Activated CD4-positive, alpha-beta T cell treated with anti-CD3 and anti-CD28 coated beads for 36 hours (primary cell): ENCODE measurements at regions of chr19 and their contacts with region 1.

Region 1: DNA sequence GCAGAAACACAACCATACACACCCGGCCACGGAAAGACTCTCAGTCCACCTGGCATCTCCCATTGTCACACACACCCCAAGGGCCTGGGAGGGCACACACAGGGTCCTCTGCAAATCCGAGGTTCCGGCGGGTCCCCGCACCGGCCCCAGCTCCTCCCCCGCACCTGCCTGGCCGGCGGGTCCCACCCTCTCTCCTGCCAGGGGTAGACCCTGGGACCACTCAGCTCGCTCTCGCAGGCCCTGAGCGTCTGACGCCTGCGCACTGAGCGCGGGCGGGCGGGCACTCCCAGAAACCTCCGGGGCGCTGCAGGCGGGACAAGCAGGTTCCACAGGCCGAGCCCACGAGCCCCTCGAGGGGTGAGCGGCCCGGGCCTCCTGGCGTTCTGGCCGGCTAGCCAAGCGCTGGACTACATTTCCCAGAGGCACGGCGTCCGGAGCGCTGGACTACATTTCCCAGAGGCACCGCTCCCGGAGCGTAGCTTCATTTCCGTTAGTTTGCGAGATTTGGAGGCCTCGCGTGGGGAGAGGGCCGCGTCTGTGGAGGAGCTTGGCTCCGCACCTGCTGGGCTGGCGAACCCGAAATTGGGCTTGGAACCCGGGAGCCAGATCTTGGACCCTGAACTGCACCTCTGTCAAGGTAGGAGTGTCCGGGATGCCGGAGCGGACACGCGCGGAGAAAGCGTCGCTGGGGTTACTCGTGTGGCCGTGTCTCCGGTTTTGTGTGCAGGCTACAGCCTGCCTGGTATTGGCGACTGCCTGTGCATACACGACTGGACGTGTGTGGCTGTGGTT is at the start of gene ZNF420:
- DNase-seq: peak; percentile 93
- ATAC-seq: peak; percentile 95
- H3K4me3 Mint-ChIP-seq: peak within 1 kb of the TSS; percentile 97
- H3K27ac Mint-ChIP-seq: peak within 1 kb of the TSS; percentile 98
- H3K4me1 Mint-ChIP-seq: peaks cover 23% of the 10 kb centered on the region
- H3K27me3 Mint-ChIP-seq: no peaks in the 10 kb centered on the region
- total RNA-seq, gene ZNF420: 9.1 to 12.8 TPM

Region 2: DNA sequence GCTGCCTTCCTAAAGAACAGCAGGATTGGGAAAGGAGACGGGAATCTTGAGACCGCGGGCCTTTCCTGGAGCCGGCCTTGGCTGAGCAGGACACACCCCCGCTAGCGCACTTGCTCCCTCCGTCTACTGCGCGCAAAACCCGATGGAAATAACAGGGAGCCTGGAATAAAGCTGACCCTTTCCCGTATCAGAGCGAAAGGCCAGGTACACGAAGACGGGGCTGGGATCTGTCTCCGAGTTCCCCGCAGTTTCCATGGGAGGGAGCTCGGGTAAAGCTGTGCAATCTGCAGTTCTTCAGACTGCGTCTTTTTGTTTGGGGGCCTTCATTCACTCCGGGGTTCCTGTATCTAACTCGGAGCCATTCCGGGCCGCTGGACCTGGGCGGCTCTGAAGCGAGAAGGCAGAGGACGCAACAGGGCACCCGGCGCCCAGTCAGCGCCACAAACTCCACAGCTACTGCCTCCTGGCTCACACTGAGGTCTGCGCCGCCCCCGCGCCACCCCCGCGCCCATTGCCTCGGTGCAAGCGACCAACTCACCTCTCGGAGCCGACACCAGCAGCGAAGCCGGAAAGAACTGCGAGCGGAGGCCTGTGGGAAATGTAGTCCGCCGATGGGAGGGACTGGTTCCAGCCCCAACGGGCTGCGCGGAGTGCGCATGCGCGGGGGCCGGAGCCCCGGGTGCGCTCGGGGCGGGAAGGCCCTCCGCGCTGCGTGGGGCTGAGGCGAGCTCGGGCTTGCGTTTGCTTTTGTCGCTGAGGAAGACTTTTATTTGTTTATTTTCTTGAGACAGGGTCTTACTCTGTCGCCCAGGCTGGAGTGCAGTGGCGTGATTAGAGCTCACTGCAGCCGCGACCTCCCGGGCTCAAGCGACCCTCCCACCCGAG is 699.3 kb before region 1 on chr19 and contains the start of gene ZFP14:
- CTCF ChIA-PET with region 1: no interaction called
- POLR2A ChIA-PET with region 1: no interaction called
- intact Hi-C with region 1: loop called in 1 of 2 experiments (anchors 2 kb)
- DNase-seq: peak; percentile 97
- ATAC-seq: peak; percentile 99
- H3K4me3 Mint-ChIP-seq: peak within 1 kb of the TSS; percentile 93
- H3K27ac Mint-ChIP-seq: peak within 1 kb of the TSS; percentile 88
- H3K4me1 Mint-ChIP-seq: peaks cover 18% of the 10 kb centered on the region
- H3K27me3 Mint-ChIP-seq: no peaks in the 10 kb centered on the region
- total RNA-seq, gene ZFP14: 1.4 to 1.8 TPM

Region 3: GRCh38 chr19:36573020-36573885 is 504.9 kb before region 1 on chr19 and contains the start of gene ZNF529:
- CTCF ChIA-PET with region 1: no interaction called
- POLR2A ChIA-PET with region 1: no interaction called
- intact Hi-C with region 1: loop called in 1 of 2 experiments (anchors 1 kb)
- DNase-seq: peak; percentile 91
- ATAC-seq: peak; percentile 90
- H3K4me3 Mint-ChIP-seq: peak within 1 kb of the TSS; percentile 83
- H3K27ac Mint-ChIP-seq: peak within 1 kb of the TSS; percentile 93
- H3K4me1 Mint-ChIP-seq: peaks cover 27% of the 10 kb centered on the region
- H3K27me3 Mint-ChIP-seq: no peaks in the 10 kb centered on the region
- total RNA-seq, gene ZNF529: 12.5 to 19.2 TPM

Region 4: DNA sequence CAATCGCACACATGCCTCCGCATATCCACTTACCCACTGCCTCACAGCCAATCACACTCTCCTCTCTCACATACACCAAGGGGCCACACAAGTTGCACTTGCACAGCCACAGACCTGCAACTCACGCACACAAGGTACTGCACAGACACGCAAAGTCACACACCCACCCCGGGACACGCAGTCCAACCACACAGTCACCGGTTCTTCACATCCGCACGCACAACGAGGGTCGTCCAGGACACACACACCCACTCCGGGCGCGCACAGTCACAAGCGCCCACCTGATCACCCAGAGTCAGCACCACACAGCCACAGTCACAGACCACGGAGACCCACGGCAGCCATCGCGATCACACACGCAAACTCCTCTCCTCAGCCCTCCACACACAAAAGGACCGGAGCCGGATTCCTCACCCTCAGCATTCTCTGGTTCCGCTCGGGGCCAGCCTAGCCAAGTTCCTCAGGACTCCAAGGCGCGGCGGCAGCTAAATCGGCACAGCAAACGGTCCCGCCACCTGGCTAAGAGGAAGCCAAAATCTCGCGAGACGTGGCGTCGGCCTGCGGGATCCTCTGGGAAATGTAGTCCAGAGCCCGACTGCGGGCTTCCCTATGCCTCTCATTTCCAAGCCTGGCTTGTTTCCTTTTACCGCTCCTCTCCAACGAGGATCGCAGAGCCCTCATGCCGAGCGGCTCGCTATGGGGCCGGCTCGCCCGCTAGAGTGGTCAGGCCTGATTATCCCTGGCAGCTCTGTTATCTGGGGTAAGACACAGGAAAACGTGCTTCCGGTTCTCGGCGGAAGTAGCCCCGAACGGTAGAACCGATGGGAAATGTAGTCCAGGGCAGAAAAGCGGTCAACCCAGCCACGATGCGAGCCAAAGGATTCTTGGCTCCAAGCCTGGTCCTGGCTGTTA is 305.6 kb before region 1 on chr19 and contains the start of gene ZNF850:
- CTCF ChIA-PET with region 1: no interaction called
- POLR2A ChIA-PET with region 1: no interaction called
- intact Hi-C with region 1: loop called in 1 of 2 experiments (anchors 2 kb)
- DNase-seq: peak; percentile 97
- ATAC-seq: peak; percentile 92
- H3K4me3 Mint-ChIP-seq: peak within 1 kb of the TSS; percentile 99
- H3K27ac Mint-ChIP-seq: peak within 1 kb of the TSS; percentile 97
- H3K4me1 Mint-ChIP-seq: peaks cover 20% of the 10 kb centered on the region
- H3K27me3 Mint-ChIP-seq: no peaks in the 10 kb centered on the region
- total RNA-seq, gene ZNF850: 7.0 to 10.7 TPM

Region 5: DNA sequence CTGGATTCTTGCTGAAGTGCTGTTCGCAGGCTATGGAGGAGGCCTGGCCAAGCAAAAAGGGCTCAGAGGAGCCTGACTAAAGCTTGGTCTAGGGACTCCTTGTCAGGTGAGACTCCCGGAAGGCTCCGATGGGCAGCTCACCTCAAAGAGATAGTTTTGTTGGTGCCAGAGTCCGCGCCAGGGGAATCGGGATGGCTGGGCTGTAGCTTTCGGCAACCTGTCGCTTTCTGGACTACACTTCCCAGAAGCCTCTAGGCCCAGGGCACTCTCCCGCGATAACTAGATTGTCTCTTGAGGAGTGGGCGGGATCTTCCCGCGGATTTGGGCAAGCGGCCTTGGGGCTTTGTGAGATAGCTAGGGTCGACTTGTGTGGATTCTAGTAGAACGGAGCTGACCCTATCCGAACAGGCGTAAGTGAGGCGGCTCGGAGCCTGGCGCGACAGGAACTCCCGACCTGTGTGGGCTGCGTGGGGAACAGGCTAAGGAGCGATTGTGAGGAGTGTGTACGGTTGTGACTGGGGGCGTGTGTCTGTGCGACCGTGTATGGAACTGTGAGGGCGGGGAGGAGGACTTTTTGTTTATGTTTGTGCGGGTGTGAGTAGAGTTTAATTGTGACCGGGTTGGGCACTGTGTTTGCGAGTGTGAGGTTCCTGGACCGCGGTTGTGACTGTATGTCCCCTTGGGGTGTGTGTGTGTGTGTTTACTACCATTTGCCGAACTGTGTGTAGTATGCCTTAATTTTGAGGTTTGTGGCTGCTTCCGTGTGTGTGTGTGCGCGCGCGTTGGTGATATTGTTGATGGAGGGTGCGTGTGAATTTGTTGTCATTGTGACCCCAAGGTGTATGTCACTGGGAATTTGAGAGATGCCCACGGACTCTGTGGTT is 227.3 kb before region 1 on chr19 and contains the start of gene ZNF345:
- CTCF ChIA-PET with region 1: no interaction called
- POLR2A ChIA-PET with region 1: interaction called, 6 read pairs
- intact Hi-C with region 1: loop called in 1 of 2 experiments (anchors 1 kb)
- DNase-seq: peak; percentile 91
- ATAC-seq: peak; percentile 82
- H3K4me3 Mint-ChIP-seq: no peak within 1 kb of the TSS
- H3K27ac Mint-ChIP-seq: no peak within 1 kb of the TSS
- H3K4me1 Mint-ChIP-seq: peaks cover 10% of the 10 kb centered on the region
- H3K27me3 Mint-ChIP-seq: no peaks in the 10 kb centered on the region
- total RNA-seq, gene ZNF345: 3.5 to 4.6 TPM

Region 6: DNA sequence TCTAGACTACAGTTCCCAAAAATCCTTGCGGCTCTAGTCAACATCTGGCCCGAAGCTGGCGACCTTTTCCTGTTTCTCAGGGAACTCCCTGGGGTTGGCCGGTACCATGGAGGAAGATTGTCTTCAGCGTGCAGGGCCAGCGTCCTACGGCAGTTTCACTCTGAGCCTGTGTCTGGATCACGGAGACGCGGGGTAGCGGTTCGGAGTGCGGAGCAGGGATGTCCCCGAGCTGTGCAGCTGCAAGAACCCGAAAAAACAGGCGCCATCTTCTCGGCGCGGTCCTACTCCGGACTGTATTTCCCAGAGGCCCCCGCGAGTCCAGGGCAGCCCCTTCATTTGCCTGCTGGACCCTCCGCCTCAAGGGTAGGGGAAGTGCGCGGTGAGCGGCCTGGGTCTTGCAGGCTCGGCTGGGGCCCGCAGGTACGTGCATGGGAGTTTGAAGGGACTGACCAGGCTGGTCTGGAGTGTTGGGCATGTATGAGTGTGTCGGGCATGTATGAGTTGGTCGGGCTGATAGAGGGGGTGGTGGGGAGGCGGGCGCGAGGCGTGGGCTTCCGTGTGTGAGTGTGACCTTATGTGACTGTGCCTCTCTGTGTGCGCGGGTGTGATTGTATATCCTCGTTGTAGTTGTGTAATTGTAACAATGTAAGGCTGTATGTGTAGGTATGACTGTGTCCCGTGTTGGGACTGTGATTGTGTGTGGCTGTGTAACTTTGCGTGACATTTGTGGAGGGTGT is 139.9 kb after region 1 on chr19 and contains the start of gene ZNF383:
- CTCF ChIA-PET with region 1: no interaction called
- POLR2A ChIA-PET with region 1: interaction called, 8 read pairs
- intact Hi-C with region 1: loop called (anchors 2 to 5 kb)
- DNase-seq: peak; percentile 89
- ATAC-seq: peak; percentile 87
- H3K4me3 Mint-ChIP-seq: peak within 1 kb of the TSS; percentile 93
- H3K27ac Mint-ChIP-seq: peak within 1 kb of the TSS; percentile 99
- H3K4me1 Mint-ChIP-seq: peaks cover 24% of the 10 kb centered on the region
- H3K27me3 Mint-ChIP-seq: no peaks in the 10 kb centered on the region
- total RNA-seq, gene ZNF383: 8.5 to 9.2 TPM

Region 7: DNA sequence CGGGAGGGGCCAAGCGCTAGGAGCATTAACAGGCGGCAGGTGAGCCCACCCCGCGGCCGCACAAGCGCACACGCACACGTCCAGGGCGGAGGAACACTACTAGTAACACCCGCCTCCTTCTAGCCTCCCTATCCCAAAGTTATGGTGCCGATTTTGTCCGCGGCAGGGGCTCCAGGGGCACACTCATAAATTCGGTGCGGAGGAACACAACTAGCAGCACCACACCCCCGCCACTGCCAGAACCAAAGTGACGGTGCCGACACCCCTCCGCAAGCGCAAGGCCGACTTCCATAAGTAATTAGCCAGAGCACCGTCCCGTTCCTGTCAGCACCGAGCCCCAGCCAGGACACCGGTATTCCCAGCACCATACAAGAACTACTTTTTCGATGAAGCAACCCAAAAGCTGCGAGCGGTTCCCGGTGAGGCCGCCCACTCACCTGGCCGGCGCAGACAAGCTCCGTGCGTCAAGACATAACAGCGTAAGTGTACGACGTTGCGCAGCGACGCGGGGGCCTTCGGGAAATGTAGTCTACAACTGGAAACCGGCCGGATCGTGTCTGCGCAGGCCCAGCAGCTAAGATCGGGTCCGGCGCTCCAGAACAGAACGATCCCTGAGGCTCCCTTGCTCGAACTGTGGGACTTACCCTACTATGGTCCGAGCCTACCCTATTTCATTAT is 516.3 kb after region 1 on chr19 and contains the starts of genes ZNF540 and ZNF571:
- CTCF ChIA-PET with region 1: no interaction called
- POLR2A ChIA-PET with region 1: interaction called, 3 read pairs
- intact Hi-C with region 1: loop called in 1 of 2 experiments (anchors 2 kb)
- DNase-seq: peak; percentile 97
- ATAC-seq: peak; percentile 97
- H3K4me3 Mint-ChIP-seq: peak within 1 kb of the TSS; percentile 94
- H3K27ac Mint-ChIP-seq: peak within 1 kb of the TSS; percentile 99
- H3K4me1 Mint-ChIP-seq: peaks cover 27% of the 10 kb centered on the region
- H3K27me3 Mint-ChIP-seq: no peaks in the 10 kb centered on the region
- total RNA-seq, gene ZNF540: 0.67 to 1.1 TPM
- total RNA-seq, gene ZNF571: 2.4 to 2.9 TPM